Activated CD8-positive, alpha-beta T cell treated with anti-CD3 and anti-CD28 coated beads for 36 hours (primary cell): ENCODE measurements at regions of chr3 and their contacts with region 1.

Region 1: DNA sequence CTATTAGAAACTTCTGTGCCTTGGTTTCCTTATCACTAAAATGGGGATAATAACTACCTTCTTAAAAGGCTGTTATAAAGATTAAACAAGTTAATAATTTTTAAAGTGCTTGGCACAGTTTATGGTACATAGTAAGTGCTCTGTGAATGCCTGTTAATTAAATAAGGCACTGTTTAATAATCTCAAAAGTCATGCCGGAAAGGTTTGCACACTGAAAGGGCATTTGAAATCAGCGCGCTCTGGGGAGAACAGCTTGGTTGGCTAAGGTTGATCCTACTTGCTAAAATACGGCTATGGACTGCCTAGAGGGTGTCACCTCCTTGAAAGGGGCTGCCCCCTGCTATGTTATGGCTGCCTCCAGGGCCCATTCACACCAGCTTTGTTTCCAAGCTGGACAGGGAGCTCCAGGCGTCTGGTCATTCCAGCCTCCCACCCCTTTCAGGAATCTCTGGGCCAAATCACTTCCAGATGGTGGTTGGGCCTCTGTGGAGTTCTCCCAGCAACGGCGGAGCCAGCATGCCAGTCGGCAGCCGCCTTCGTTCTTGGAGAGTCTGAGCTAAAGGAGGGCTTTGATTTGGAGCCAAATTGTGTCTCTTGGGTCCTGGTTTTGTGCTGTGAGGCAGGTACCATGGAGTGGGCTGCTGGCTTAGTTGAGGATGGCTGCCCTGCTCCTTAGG is 5.9 kb downstream of the FLNB start:
- DNase-seq: no peak
- ATAC-seq: no peak
- H3K4me3 Mint-ChIP-seq: no peak overlapping the region
- H3K27ac Mint-ChIP-seq: no peak overlapping the region
- H3K4me1 Mint-ChIP-seq: peaks cover 52% of the 10 kb centered on the region
- H3K27me3 Mint-ChIP-seq: no peaks in the 10 kb centered on the region
- CTCF ChIP-seq: no peak

Region 2: DNA sequence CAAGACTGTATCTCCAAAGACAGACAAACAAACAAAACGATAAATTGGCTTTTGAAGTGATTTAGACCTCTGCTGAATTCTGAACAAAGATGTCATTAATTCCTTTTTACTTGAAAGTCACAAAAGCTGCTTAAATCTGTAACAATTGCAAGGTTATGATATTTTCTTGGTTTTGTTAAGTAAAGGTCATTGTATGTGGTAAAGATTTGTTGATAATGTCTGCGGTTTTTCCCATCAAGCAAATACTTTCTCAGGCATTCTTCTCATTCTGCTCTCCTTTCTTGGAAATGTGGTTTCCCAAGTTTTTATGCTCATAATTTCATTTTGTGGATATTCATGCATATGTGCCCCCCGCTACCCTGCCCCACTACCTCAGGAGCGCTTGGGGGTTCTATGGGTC is 141.5 kb before region 1 on chr3:
- CTCF ChIA-PET with region 1: no interaction called
- POLR2A ChIA-PET with region 1: no interaction called
- intact Hi-C with region 1: no loop called
- DNase-seq: no peak
- ATAC-seq: no peak
- H3K4me3 Mint-ChIP-seq: no peak overlapping the region
- H3K27ac Mint-ChIP-seq: no peak overlapping the region
- H3K4me1 Mint-ChIP-seq: no peaks in the 10 kb centered on the region
- H3K27me3 Mint-ChIP-seq: no peaks in the 10 kb centered on the region
- CTCF ChIP-seq: no peak

Region 3: DNA sequence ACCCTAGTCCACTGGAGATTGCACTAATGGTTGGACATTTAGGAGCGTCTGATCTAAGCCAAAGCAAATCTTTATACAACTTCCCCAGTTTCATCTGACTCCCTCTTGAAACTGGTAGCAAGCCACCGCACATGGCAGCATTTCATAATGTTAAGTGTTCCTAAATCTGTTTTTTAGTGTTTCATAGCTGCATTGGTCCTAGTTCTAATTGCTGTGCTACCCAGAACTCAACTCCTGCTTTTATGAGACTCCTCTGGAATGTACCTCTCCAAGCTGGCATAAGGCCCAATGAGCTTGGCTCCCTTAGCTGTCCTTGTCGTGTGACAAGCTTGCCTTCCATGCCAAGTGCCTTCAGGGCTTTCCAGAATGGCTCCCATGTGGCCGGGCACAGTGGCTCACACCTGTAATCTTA is 71.2 kb before region 1 on chr3:
- CTCF ChIA-PET with region 1: no interaction called
- POLR2A ChIA-PET with region 1: no interaction called
- intact Hi-C with region 1: no loop called
- DNase-seq: no peak
- ATAC-seq: no peak
- H3K4me3 Mint-ChIP-seq: no peak overlapping the region
- H3K27ac Mint-ChIP-seq: no peak overlapping the region
- H3K4me1 Mint-ChIP-seq: no peaks in the 10 kb centered on the region
- H3K27me3 Mint-ChIP-seq: no peaks in the 10 kb centered on the region
- CTCF ChIP-seq: no peak

Region 4: DNA sequence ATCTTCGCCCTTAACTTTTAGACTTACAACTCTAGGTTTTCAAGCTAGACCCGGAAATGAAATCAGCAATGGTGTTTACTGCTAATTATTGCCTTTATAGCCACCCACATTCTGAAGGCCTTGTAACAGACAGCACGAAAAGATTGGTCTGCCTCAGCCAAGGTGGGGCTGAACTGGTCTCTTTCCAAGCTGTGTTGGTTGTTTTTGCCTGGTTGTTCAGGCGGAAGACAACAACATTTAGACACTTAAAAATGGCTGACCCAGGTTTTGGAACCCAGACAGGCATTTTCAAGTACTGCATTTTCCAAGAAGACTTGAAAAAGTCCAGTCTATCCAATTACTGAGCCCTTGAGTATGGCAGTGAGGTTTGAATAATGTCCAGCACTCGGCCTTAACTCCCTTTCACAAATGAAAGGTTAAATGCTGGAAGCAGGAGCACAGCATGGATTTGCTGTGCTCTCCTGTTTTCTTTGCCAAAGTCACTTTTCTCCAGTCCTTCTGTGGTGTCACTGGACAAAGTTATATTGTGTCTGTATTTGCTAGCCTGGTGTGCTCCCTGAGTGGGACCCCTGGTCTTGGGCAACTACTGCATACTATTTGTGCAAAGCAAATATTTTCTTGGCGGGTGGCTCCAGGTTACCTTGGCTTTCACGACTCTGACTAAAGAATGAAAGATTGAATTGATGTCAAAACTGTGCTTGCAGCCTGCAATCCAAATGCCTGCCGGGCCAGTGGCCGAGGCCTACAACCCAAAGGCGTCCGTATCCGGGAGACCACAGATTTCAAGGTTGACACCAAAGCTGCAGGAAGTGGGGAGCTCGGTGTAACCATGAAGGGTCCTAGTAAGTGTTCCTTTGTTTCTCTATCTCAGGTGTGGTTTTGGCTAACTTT is 87.6 kb after region 1 on chr3:
- CTCF ChIA-PET with region 1: interaction called, 3 read pairs
- POLR2A ChIA-PET with region 1: interaction called, 3 read pairs
- intact Hi-C with region 1: loop called (anchors 10 kb)
- DNase-seq: peak; percentile 17
- ATAC-seq: no peak
- H3K4me3 Mint-ChIP-seq: no peak overlapping the region
- H3K27ac Mint-ChIP-seq: no peak overlapping the region
- H3K4me1 Mint-ChIP-seq: peaks cover 39% of the 10 kb centered on the region
- H3K27me3 Mint-ChIP-seq: no peaks in the 10 kb centered on the region
- CTCF ChIP-seq: no peak